ENCODE measurements at regions of chr11 and their contacts with region 1.

Region 1: GRCh38 chr11:7098235-7098832 is 9.5 kb downstream of the RBMXL2 start:
- DNase-seq: peak; percentile 78
- ATAC-seq: peak; percentile 97
- H3K4me3 ChIP-seq: no peak overlapping the region
- H3K27ac ChIP-seq: no peak overlapping the region
- H3K4me1 ChIP-seq: no peaks in the 10 kb centered on the region; the same call in 1 of the 2 replicates
- H3K27me3 ChIP-seq: peaks cover 24% of the 10 kb centered on the region
- CTCF ChIP-seq: peak; percentile 78

Region 2: DNA sequence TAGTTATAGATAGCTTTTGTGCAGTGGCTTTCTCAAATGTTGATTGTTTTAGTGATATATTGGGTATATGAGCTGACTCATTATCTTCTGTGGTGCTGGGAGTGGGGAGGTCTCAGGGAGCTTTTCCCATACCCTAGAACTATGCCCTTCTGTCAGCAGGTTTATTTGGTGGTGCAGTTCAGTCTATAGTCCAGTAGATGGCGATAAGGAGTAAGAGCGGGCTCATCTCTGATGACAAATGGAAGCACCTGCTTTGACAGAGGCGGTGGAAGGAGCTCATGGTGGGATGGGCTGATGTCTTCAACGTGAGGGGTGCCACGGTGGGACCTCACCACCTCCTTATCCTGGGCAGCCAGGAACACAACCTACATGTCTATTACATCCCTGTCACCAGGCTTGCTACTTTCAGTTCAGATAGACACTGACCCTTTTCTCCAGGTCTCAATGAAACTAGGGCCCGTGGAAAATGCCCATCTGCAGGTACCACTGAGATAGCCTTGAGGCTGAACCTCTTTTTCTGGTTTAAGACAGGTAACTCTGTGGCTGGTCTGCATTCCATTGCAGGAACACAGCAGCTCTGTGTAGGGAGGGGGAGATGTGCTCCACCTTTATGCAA is 285.8 kb before region 1 on chr11:
- CTCF ChIA-PET with region 1: no interaction called
- POLR2A ChIA-PET with region 1: no interaction called
- in situ Hi-C with region 1: no loop called
- intact Hi-C with region 1: loop called (anchors 10 kb)
- DNase-seq: peak; percentile 65
- ATAC-seq: peak; percentile 91
- H3K4me3 ChIP-seq: no peak overlapping the region
- H3K27ac ChIP-seq: no peak overlapping the region
- H3K4me1 ChIP-seq: no peaks in the 10 kb centered on the region
- H3K27me3 ChIP-seq: no peaks in the 10 kb centered on the region
- CTCF ChIP-seq: peak; percentile 99

Region 3: DNA sequence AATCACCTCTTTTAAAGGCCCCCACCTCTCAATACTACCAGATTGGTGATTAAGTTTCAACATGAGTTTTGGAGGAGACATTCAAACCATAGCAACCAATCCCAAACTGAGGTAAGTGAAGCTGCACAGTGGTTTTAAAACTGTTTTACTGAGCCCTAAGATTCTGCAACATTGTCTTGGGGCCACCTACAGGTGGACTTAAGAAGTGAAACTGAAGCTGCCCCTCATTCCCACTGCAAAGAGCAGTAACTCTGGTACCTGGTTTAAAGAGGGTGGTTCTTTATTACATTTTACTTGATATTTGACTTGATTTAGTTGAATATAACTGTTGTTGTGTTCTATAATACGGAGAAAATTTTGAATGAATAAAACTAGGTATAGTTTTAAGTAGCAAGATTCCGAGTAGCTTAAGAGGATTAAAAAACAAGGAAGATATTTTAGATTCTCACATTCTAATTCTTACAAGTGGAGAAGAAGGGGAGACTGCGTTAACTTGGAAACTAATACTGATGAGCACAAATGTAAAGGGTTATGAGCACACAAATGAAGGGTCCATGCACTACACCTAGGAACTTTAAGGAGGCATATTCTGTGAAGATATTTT is 180.1 kb after region 1 on chr11:
- CTCF ChIA-PET with region 1: interaction called, 6 read pairs
- POLR2A ChIA-PET with region 1: no interaction called
- in situ Hi-C with region 1: no loop called
- intact Hi-C with region 1: loop called (anchors 2 kb)
- DNase-seq: peak; percentile 51
- ATAC-seq: peak; percentile 78
- H3K4me3 ChIP-seq: no peak overlapping the region
- H3K27ac ChIP-seq: no peak overlapping the region
- H3K4me1 ChIP-seq: no peaks in the 10 kb centered on the region
- H3K27me3 ChIP-seq: no peaks in the 10 kb centered on the region
- CTCF ChIP-seq: peak; percentile 91

Region 4: DNA sequence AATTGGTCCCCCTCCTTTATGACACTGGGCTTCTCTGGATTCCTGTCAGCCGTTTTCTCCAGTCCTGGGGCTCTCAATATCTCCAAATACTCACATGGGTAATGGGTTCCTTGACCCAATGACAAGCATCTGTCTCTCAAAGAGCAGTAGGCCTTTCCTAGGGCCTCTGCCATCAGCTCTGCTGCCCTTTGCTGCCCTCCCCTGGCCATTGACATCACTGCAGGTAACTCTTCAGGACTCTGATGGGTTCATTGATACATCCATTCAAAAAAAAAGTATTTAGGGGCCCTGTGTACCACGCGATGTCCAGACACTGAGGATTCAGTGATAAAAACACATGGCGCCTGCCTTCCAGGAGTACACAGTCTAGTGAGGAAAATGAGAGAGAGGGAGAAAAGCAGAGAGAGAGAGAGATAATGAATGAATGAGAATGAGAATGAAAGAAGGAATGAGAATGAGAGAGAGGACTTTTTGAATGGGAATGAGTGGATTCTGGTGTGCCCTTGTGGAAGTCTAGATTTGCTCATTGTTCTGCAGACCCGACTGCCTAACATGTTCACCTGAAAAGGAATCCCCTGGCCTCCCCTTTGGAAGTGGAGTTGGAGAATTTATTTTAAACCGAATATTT is 344.4 kb after region 1 on chr11:
- CTCF ChIA-PET with region 1: interaction called, 7 read pairs
- POLR2A ChIA-PET with region 1: no interaction called
- in situ Hi-C with region 1: no loop called
- intact Hi-C with region 1: loop called (anchors 2 kb)
- DNase-seq: peak; percentile 56
- ATAC-seq: peak; percentile 92
- H3K4me3 ChIP-seq: no peak overlapping the region
- H3K27ac ChIP-seq: no peak overlapping the region
- H3K4me1 ChIP-seq: no peaks in the 10 kb centered on the region
- H3K27me3 ChIP-seq: peaks cover 2% of the 10 kb centered on the region; the same call in 1 of the 2 replicates
- CTCF ChIP-seq: peak; percentile 99

Region 5: DNA sequence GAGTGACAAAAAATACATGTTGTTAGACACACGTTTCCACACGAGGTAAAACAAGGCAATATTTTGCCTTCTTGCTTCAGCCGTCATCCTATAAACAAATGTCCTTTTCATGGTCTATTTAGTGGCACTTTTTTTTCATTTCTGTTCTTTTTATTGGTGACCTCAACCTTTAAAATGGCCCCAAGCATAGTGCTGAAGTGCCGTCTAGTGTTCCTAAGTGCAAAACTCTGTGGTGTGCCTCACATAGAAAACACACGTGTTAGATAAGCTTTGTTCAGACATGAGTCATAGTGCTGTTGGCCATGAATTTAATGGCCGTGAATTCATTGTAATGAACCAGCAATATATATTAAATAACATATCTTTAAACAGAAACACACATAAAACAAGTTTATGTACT is 592.3 kb after region 1 on chr11:
- CTCF ChIA-PET with region 1: interaction called, 7 read pairs
- POLR2A ChIA-PET with region 1: no interaction called
- in situ Hi-C with region 1: no loop called
- intact Hi-C with region 1: loop called (anchors 5 kb)
- DNase-seq: no peak
- ATAC-seq: no peak
- H3K4me3 ChIP-seq: no peak overlapping the region
- H3K27ac ChIP-seq: no peak overlapping the region
- H3K4me1 ChIP-seq: no peaks in the 10 kb centered on the region
- H3K27me3 ChIP-seq: peaks cover 49% of the 10 kb centered on the region
- CTCF ChIP-seq: no peak

Region 6: GRCh38 chr11:7986768-7987559 is 888.6 kb after region 1 on chr11 and contains the start of gene EIF3F:
- CTCF ChIA-PET with region 1: interaction called, 3 read pairs
- POLR2A ChIA-PET with region 1: no interaction called
- in situ Hi-C with region 1: no loop called
- intact Hi-C with region 1: loop called (anchors 10 kb)
- DNase-seq: peak; percentile 100
- ATAC-seq: peak; percentile 100
- H3K4me3 ChIP-seq: peak within 1 kb of the TSS; percentile 85
- H3K27ac ChIP-seq: peak within 1 kb of the TSS; percentile 95
- H3K4me1 ChIP-seq: peaks cover 21% of the 10 kb centered on the region
- H3K27me3 ChIP-seq: no peaks in the 10 kb centered on the region
- CTCF ChIP-seq: peak; percentile 98
- total RNA-seq, gene EIF3F: 387 TPM

Measured in Panc1 (cell line).